A549 (cell line): ENCODE measurements at regions of chr12 and their contacts with region 1.

Region 1: DNA sequence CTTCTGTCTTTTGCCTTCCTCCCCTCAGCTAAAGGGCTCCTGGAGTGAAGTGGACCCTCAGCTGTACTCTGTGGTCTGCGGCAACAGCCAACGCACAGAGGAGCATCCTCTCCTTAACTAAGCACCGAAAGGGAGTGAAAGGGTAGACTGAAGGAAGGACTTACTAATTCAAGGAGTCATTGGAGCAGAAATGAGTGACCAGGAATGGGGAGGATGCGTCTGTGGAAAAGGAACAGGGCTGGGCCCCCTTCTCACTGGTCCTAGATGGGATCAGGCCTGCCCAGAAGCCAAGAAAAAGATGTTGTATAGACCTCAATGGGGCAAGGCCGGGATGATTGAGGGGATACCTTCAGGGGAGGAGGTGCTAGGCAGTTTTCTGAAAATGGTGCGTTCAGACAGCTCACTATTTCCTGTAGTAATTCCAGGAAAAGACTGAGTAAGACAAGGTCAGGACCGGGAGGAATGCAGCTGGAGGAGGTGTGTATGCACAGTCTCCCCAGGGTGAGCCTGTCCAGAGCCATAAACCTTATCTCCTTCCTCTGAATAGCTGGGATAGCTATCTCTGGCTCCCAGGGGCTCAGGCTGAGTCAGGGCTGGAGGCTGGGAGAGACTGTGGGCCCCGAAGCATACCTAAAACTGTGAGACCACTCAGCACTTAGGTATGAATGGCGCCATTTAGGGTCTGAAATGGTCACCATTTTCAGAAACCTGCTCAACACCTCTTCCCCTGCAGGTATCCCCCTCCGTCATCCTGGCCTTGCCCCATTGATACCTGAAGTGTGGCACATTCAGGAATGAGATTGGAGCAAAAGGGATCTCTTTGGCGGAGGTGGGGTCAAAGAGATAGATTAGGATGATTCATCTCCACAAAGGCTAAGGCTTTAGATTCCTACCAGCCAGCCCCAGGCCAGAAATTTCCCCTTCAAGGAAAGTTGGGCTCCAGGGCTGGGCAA is 20.2 kb upstream of the KRT8 start:
- DNase-seq: peak; percentile 85 to 94
- ATAC-seq: peak; percentile 57 to 80
- H3K4me3 ChIP-seq: peak overlapping the region; percentile 27; the same call in 2 of the 3 replicates
- H3K27ac ChIP-seq: peak overlapping the region; percentile 96 to 97
- H3K4me1 ChIP-seq: peaks cover 85% of the 10 kb centered on the region
- CTCF ChIP-seq: no peak
- EP300 ChIP-seq: peak; percentile 62 to 90; a peak in 4 of 5 replicates
- POLR2A ChIP-seq: no peak
- RAD21 ChIP-seq: peak in 1 of 2 experiments; percentile 32; a peak in 2 of 5 replicates

Region 2: DNA sequence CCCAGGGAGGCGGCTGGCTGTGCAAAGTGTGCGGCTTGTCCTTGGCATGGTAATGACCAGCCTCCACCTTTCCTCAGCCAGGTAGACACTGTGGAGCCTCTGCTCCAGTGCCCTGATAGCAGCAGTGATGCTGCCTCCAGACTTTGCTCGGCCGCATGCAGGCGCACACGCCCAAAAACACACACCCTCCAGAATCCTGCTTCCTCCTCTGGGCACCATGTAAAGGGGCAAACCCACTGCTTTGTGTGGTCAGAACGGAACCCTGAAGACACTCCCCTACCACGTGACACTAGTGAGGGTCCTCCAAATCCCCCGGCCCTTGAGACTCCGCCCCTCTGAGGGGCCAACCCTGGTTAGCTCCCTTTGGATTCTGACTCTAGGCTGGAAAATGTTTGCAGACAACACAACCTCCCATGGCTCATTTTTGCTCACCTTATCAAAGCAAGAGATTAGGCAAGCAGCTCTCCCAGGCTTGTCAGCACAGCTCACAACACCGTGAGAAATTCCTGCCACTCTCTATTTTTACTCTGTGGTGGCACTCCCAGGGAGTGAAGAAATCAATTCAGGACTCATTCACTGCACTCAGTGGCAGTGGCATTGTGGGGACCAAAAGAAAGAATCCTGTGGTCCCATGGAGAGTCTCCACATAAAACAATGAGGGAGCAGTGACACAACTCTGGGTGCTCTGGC is 226.2 kb before region 1 on chr12:
- CTCF ChIA-PET with region 1: no interaction called
- POLR2A ChIA-PET with region 1: no interaction called
- DNase-seq: no peak
- ATAC-seq: no peak; a peak in 1 of 6 replicates
- H3K4me3 ChIP-seq: no peak overlapping the region
- H3K27ac ChIP-seq: no peak overlapping the region
- H3K4me1 ChIP-seq: no peaks in the 10 kb centered on the region
- CTCF ChIP-seq: no peak
- EP300 ChIP-seq: no peak
- POLR2A ChIP-seq: no peak
- RAD21 ChIP-seq: no peak

Region 3: DNA sequence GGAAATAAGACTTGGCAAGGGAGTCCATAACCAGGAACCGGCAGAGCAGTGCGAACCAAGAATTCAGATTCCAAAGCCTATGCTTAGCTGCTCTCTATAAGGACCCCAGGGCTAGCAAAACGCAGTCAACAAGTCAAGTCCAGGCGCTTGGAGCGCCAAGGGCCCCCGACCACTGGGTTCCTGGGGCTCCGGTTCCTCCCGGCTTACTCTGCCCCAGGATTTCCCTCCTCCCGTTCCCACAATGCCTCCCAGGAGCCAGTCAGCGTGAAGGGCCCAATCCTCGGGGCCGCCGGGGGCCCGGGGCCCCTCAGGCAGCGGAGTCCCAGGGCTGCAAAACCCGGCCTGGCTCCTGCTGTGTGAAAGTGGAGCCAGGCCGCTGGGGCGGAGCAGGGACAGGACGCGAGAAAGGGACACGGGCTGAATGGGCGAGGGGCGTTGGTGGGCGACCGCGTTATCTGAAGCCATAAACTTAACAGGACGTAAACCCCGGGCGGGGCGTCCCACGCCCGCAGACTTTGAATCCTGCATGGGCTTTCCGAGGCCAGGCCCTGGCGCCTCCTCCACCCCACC is 21.7 kb before region 1 on chr12:
- CTCF ChIA-PET with region 1: interaction called, 126 read pairs
- POLR2A ChIA-PET with region 1: interaction called, 205 read pairs
- DNase-seq: peak; percentile 50 to 69
- ATAC-seq: peak; percentile 26 to 39; a peak in 5 of 6 replicates
- H3K4me3 ChIP-seq: peak overlapping the region; percentile 87
- H3K27ac ChIP-seq: peak overlapping the region; percentile 91 to 99
- H3K4me1 ChIP-seq: peaks cover 72% of the 10 kb centered on the region
- CTCF ChIP-seq: no peak
- EP300 ChIP-seq: no peak
- POLR2A ChIP-seq: peak; percentile 9; the same call in 1 of the 2 replicates
- RAD21 ChIP-seq: 0 out of 5 replicates have a peak, but pooled peaks of 1 of the 2 experiments have one; percentile 2

Region 4: DNA sequence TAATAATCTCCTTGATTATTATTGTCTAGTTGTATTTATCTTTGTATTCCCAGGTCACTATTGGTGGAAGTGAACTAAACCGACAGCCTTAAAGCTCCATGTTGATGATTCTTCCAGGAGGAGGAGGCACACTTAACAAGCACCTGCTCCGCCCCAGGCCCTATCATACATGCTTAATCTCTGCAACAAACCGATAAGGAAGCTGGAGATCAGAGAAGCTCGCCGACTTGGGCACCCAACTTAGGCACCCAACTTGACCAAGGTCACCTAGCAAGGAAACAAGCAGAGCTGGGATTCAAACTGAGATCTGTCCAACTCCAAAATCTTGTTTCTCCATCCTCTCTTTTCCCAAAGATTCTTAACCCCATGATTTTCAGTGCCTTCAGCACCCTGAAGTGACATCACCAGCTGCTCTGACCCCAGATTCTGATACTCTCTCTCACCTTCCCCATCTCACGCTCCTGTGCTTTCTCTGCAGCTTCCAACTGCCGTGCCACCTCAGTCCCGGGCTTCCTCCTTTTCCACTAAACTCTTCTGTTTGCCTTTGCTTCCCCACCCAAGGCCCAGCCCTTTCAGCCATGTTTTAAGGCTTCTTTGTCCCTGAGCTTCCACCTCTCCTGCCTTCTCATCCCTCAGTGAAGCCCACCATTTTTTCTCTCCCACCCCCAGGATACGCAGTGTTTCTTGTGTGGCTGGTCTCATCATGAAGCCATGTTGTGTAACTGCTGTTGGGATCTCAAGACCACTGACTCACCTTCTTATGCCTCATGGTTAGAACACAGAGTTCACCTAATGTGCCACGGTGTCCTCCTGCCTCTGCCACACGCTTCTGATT is 17.2 kb after region 1 on chr12:
- CTCF ChIA-PET with region 1: interaction called, 23 read pairs
- POLR2A ChIA-PET with region 1: interaction called, 79 read pairs
- DNase-seq: no peak
- ATAC-seq: no peak
- H3K4me3 ChIP-seq: no peak overlapping the region
- H3K27ac ChIP-seq: peak overlapping the region; percentile 96 to 97
- H3K4me1 ChIP-seq: peaks cover 50% of the 10 kb centered on the region
- CTCF ChIP-seq: no peak
- EP300 ChIP-seq: no peak
- POLR2A ChIP-seq: no peak
- RAD21 ChIP-seq: no peak

Region 5: GRCh38 chr12:52956987-52957386 is 31.9 kb after region 1 on chr12:
- CTCF ChIA-PET with region 1: interaction called, 42 read pairs
- POLR2A ChIA-PET with region 1: interaction called, 13 read pairs
- DNase-seq: peak in 1 of 2 experiments; percentile 69
- ATAC-seq: peak; percentile 25 to 43; a peak in 3 of 6 replicates
- H3K4me3 ChIP-seq: no peak overlapping the region
- H3K27ac ChIP-seq: peak overlapping the region; percentile 18 to 61; a peak in 3 of 6 replicates
- H3K4me1 ChIP-seq: peaks cover 21% of the 10 kb centered on the region
- CTCF ChIP-seq: no peak
- EP300 ChIP-seq: no peak
- POLR2A ChIP-seq: no peak
- RAD21 ChIP-seq: no peak